ENCODE measurements at regions of chr15 and their contacts with region 1.

Region 1: GRCh38 chr15:42704492-42704926 is 32.4 kb downstream of the CDAN1 start:
- DNase-seq: peak; percentile 46
- H3K4me3 ChIP-seq: no peak overlapping the region
- H3K27ac ChIP-seq: no peak overlapping the region
- H3K4me1 ChIP-seq: peaks cover 6% of the 10 kb centered on the region
- H3K27me3 ChIP-seq: no peaks in the 10 kb centered on the region
- CTCF ChIP-seq: peak; percentile 94 to 96

Region 2: DNA sequence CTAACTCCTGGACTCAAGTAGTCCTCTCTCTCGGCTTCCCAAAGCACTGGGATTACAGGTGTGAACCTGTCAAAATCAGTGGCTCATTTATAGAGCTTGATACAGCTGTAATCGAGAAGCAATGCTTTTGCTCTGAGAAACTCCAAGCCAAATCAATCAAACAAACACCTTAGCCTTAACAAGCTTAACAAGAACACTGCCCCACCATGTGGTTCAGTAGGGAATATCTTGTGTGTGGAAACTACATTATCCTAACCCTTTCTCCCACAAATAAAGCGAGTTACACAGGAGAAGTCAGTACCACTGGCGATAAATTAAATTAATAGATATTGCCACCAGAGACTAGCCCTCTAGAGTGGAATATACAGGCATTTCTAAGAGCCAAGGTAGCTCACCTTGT is 18.5 kb after region 1 on chr15:
- CTCF ChIA-PET with region 1: no interaction called
- dilution Hi-C with region 1: no loop called
- in situ Hi-C with region 1: no loop called
- intact Hi-C with region 1: loop called (anchors 2 kb)
- DNase-seq: no peak
- H3K4me3 ChIP-seq: no peak overlapping the region
- H3K27ac ChIP-seq: no peak overlapping the region
- H3K4me1 ChIP-seq: peaks cover 11% of the 10 kb centered on the region
- H3K27me3 ChIP-seq: no peaks in the 10 kb centered on the region
- CTCF ChIP-seq: peak; percentile 15 to 50

Region 3: DNA sequence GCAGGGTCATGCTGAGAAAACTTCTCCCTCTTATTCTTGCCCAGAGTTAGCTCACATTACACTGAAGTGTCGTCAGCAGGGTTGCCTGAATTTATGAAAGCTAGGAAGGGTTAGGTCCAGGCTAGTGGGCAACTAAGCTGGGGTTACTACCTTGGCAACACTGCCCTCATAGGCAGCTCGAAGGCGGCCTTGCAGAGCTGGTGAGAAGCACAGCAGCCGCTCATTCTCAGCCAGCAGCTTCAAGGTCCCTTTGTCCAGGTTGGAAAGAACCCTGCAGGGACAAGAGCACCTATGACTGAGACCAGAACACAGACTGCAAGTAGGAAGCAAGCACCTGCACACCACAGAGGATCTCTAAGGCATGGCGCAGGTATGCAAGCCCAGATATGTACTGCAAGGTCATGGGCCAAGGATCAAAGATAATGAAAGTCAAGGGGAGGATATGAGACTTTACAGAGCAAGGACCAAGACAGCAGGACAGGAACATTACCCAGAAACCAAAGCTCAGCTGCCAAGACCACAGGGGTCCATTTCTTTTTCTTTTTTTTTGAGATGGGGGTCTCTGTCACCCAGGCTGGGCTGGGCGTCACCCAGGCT is 29.7 kb after region 1 on chr15:
- CTCF ChIA-PET with region 1: no interaction called
- dilution Hi-C with region 1: no loop called
- in situ Hi-C with region 1: no loop called
- intact Hi-C with region 1: no loop called
- DNase-seq: no peak
- H3K4me3 ChIP-seq: no peak overlapping the region
- H3K27ac ChIP-seq: no peak overlapping the region
- H3K4me1 ChIP-seq: peaks cover 11% of the 10 kb centered on the region
- H3K27me3 ChIP-seq: no peaks in the 10 kb centered on the region
- CTCF ChIP-seq: no peak

Region 4: DNA sequence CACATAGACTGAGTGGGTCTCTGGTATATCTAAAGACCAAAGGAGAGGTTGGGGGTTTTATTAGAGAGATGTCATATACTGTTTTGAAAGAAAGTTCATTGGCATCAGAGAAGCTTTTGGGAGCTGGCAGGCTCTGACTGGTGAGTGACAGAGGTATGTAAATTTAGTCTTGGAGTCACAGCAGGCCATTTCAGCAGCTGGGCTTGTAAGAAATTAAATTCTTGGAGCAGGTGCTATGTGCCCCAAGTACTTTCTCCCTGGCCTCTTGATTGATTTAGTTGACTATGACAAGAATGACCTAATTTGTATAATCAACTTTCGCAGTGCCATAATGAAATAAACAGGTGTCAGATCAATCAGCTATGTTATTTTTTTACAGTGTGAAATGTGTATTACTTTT is 80.2 kb after region 1 on chr15:
- CTCF ChIA-PET with region 1: no interaction called
- dilution Hi-C with region 1: no loop called
- in situ Hi-C with region 1: no loop called
- intact Hi-C with region 1: no loop called
- DNase-seq: no peak
- H3K4me3 ChIP-seq: no peak overlapping the region
- H3K27ac ChIP-seq: no peak overlapping the region
- H3K4me1 ChIP-seq: no peaks in the 10 kb centered on the region
- H3K27me3 ChIP-seq: no peaks in the 10 kb centered on the region
- CTCF ChIP-seq: no peak

Region 5: GRCh38 chr15:42800731-42801474 is 96.4 kb after region 1 on chr15:
- CTCF ChIA-PET with region 1: no interaction called
- dilution Hi-C with region 1: no loop called
- in situ Hi-C with region 1: no loop called
- intact Hi-C with region 1: loop called (anchors 1 kb)
- DNase-seq: no peak
- H3K4me3 ChIP-seq: no peak overlapping the region
- H3K27ac ChIP-seq: no peak overlapping the region
- H3K4me1 ChIP-seq: peaks cover 5% of the 10 kb centered on the region
- H3K27me3 ChIP-seq: no peaks in the 10 kb centered on the region
- CTCF ChIP-seq: peak in 1 of 2 donors; percentile 7

Region 6: GRCh38 chr15:42920519-42921227 is 216.2 kb after region 1 on chr15 and contains the start of gene TTBK2:
- CTCF ChIA-PET with region 1: no interaction called
- dilution Hi-C with region 1: no loop called
- in situ Hi-C with region 1: loop called in 1 of 2 experiments (anchors 10 kb)
- intact Hi-C with region 1: no loop called
- DNase-seq: peak; percentile 98
- H3K4me3 ChIP-seq: peak within 1 kb of the TSS; percentile 44 to 98 (median 58)
- H3K27ac ChIP-seq: peak within 1 kb of the TSS; percentile 5
- H3K4me1 ChIP-seq: peaks cover 13% of the 10 kb centered on the region
- H3K27me3 ChIP-seq: no peaks in the 10 kb centered on the region
- CTCF ChIP-seq: peak in 1 of 2 donors; percentile 17
- total RNA-seq, gene TTBK2: 14.8 to 25.8 TPM

Region 7: GRCh38 chr15:43285609-43286037 is 581.1 kb after region 1 on chr15:
- CTCF ChIA-PET with region 1: no interaction called
- dilution Hi-C with region 1: no loop called
- in situ Hi-C with region 1: no loop called
- intact Hi-C with region 1: loop called (anchors 2 kb)
- DNase-seq: peak; percentile 46
- H3K4me3 ChIP-seq: no peak overlapping the region
- H3K27ac ChIP-seq: no peak overlapping the region
- H3K4me1 ChIP-seq: no peaks in the 10 kb centered on the region
- H3K27me3 ChIP-seq: no peaks in the 10 kb centered on the region
- CTCF ChIP-seq: peak; percentile 78 to 88